GM10248 (cell line): ENCODE measurements at regions of chr3 and their contacts with region 1.

Region 1: GRCh38 chr3:112136959-112137693 is 4.1 kb upstream of the GCSAM start:
- DNase-seq: no peak
- CTCF ChIP-seq: peak; percentile 72

Region 2: GRCh38 chr3:112117841-112118571 is 19.1 kb before region 1 on chr3:
- CTCF ChIA-PET with region 1: interaction called, 94 read pairs
- POLR2A ChIA-PET with region 1: interaction called, 13 read pairs
- DNase-seq: peak; percentile 31
- CTCF ChIP-seq: peak; percentile 28

Region 3: DNA sequence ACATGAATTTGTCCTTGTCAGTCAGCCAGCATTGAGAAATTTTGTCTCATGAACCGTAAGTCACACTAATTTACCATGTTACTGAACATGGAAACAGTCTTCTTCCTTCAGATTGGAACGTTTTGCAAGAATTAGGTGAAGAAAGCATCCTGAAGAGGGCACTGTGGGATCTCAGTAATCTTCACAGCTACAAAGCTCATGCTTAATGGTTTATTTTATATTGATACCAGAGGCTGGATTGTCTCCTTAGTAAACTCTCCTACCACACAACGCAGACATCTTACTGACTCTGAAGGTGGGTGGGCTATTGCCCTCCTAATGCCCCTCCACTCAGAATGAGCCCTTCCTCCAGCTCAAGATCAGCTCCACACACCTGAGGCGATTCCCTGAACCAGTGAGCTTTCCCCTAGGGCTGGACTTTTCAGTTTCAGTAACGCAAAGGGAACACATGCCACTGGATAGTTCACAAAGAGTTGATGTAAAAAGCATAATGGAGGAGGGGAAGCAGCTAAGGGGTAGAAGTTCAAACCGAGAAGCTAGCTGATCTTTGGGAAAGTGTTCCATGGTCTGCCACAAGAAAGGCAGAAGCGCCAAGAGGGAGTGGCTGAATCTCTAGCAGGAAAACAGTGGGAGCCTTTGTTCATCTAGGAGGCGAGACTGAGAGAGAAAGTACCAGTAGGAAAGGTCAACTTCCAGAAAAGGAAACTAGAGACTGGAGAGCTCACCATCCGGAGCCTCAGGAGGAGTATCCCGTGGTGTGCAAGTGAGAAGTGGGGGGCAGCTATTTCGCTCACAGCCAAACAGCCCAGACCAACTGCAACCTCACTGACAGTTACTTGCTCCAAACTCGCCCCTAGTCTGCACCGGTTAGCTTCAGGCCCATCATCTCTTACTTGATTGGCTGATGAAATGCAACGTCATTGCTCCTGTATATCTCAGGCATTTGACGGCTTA is 156.5 kb after region 1 on chr3 and contains the start of gene SLC9C1:
- CTCF ChIA-PET with region 1: interaction called, 40 read pairs
- POLR2A ChIA-PET with region 1: no interaction called
- DNase-seq: peak; percentile 53
- CTCF ChIP-seq: peak; percentile 54

Region 4: GRCh38 chr3:112321867-112322649 is 184.9 kb after region 1 on chr3:
- CTCF ChIA-PET with region 1: interaction called, 15 read pairs
- POLR2A ChIA-PET with region 1: no interaction called
- DNase-seq: no peak
- CTCF ChIP-seq: no peak

Region 5: GRCh38 chr3:112456147-112456546 is 319.0 kb after region 1 on chr3:
- CTCF ChIA-PET with region 1: interaction called, 11 read pairs
- POLR2A ChIA-PET with region 1: no interaction called
- DNase-seq: no peak
- CTCF ChIP-seq: no peak

Region 6: GRCh38 chr3:112519424-112520001 is 382.4 kb after region 1 on chr3:
- CTCF ChIA-PET with region 1: interaction called, 22 read pairs
- POLR2A ChIA-PET with region 1: no interaction called
- DNase-seq: peak; percentile 59
- CTCF ChIP-seq: peak; percentile 62